PC-3 (cell line): ENCODE measurements at regions of chr13 and their contacts with region 1.

Region 1: GRCh38 chr13:93674337-93674755 is 447.7 kb downstream of the GPC6 start:
- DNase-seq: no peak
- ATAC-seq: no peak
- H3K4me3 ChIP-seq: no peak overlapping the region
- H3K27ac ChIP-seq: no peak overlapping the region
- H3K4me1 ChIP-seq: no peaks in the 10 kb centered on the region
- H3K27me3 ChIP-seq: no peaks in the 10 kb centered on the region
- CTCF ChIP-seq: no peak

Region 2: GRCh38 chr13:93715866-93716265 is 41.5 kb after region 1 on chr13:
- CTCF ChIA-PET with region 1: no interaction called
- POLR2A ChIA-PET with region 1: interaction called, 12 read pairs
- intact Hi-C with region 1: no loop called
- DNase-seq: peak; percentile 48
- ATAC-seq: peak; percentile 75
- H3K4me3 ChIP-seq: no peak overlapping the region
- H3K27ac ChIP-seq: peak overlapping the region; percentile 30; the same call in 1 of the 2 replicates
- H3K4me1 ChIP-seq: peaks cover 14% of the 10 kb centered on the region; the same call in 1 of the 2 replicates
- H3K27me3 ChIP-seq: no peaks in the 10 kb centered on the region
- CTCF ChIP-seq: no peak